ENCODE measurements at regions of chr1 and their contacts with region 1.

Region 1: DNA sequence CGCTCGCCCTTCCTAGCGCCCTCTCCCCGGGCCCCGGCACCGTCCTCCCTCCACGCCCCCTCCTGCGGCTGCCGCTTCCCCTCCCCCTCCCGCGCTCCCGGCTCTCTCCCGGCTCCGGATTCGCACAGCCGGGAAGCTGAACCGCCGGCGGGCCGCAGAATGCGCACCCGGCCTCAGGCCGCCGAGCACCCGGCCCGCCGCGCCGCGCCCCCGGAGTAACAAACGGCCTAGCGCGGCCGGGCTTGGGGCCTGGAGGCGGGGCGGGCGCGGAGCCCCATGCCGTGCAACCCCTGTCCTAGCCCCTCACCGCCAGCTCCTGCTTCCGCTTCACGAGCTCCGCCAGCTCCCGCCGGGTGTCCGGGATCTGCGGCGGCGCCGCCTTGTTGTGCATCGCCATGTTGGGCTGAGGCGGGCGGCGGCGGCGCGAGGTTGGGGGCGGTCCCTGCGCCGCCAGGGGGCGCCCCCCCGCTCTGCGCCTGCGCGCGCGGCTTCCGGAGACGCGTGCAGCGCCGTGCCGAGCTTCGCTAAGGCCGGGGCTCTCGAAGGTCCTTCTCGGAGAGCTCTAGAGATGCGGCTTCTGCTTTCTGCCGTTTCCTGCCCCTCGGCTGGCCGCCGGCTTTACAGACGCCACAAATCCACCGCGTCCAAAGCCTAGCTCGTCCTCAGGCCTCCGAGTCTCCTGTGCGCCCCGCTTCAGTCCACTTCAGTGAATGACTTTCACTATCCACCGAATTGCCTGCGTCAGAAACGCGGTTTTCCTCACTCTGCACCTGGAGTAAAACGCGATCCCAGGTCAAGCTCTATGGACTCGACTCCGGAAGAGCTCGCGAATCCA is at the start of gene MEAF6:
- DNase-seq: peak; percentile 77
- ATAC-seq: peak; percentile 98
- H3K4me3 ChIP-seq: peak within 1 kb of the TSS; percentile 71
- H3K27ac ChIP-seq: peak within 1 kb of the TSS; percentile 93
- H3K4me1 ChIP-seq: peaks cover 2% of the 10 kb centered on the region; the same call in 1 of the 2 replicates
- H3K27me3 ChIP-seq: no peaks in the 10 kb centered on the region
- CTCF ChIP-seq: peak; percentile 88
- POLR2A ChIP-seq: peak; percentile 78
- RAD21 ChIP-seq: no peak
- total RNA-seq, gene MEAF6: 36.2 and 44.4 TPM in 2 replicates

Region 2: DNA sequence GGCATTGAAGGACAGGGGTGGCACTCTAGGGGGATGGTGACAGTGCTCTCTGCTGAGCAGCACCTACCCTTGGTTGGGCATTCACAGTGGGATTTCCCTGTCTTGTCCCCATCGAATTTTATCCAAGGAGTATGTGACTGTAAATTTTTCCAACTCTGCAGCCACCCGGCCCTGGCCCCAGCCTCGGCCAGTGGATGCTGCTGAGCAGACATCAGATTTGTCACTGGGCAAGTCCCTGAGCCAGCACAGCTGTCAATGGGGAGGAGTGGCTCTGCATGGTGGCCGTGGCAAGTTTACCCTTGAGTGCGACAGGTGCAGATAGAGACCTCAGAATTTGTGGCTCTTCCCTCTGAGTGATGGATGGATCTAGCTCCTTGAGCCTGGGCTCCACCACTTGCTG is 791.7 kb before region 1 on chr1:
- CTCF ChIA-PET with region 1: no interaction called
- POLR2A ChIA-PET with region 1: no interaction called
- dilution Hi-C with region 1: no loop called
- in situ Hi-C with region 1: no loop called
- intact Hi-C with region 1: no loop called
- DNase-seq: no peak
- ATAC-seq: no peak
- H3K4me3 ChIP-seq: no peak overlapping the region
- H3K27ac ChIP-seq: no peak overlapping the region
- H3K4me1 ChIP-seq: no peaks in the 10 kb centered on the region
- H3K27me3 ChIP-seq: no peaks in the 10 kb centered on the region
- CTCF ChIP-seq: no peak
- POLR2A ChIP-seq: no peak
- RAD21 ChIP-seq: no peak

Region 3: DNA sequence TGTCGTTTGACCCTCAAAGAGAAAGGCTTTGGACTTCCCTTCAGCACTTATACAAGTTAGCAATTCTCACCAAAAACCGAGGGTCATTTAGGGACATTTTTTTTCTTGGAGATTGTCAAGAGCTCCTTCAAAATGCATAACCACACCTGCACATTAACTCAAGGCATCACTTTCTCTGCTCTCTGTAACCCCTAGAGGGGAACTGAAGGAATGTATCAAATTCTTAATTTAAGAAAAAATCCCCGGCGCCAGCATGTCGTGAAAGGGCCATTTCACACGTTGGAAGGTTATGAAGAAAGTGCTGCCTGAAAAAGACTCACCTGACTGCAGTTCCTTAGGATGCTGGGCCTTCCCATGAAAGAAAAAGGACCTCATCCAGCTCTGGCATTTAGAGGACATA is 171.8 kb before region 1 on chr1:
- CTCF ChIA-PET with region 1: no interaction called
- POLR2A ChIA-PET with region 1: no interaction called
- dilution Hi-C with region 1: no loop called
- in situ Hi-C with region 1: no loop called
- intact Hi-C with region 1: no loop called
- DNase-seq: no peak
- ATAC-seq: no peak
- H3K4me3 ChIP-seq: no peak overlapping the region
- H3K27ac ChIP-seq: no peak overlapping the region
- H3K4me1 ChIP-seq: no peaks in the 10 kb centered on the region
- H3K27me3 ChIP-seq: no peaks in the 10 kb centered on the region
- CTCF ChIP-seq: no peak
- POLR2A ChIP-seq: no peak
- RAD21 ChIP-seq: no peak

Region 4: GRCh38 chr1:37498872-37499617 is 15.5 kb before region 1 on chr1:
- CTCF ChIA-PET with region 1: interaction called, 10 read pairs
- POLR2A ChIA-PET with region 1: no interaction called
- dilution Hi-C with region 1: no loop called
- in situ Hi-C with region 1: no loop called
- intact Hi-C with region 1: no loop called
- DNase-seq: peak; percentile 70
- ATAC-seq: peak; percentile 72
- H3K4me3 ChIP-seq: no peak overlapping the region
- H3K27ac ChIP-seq: no peak overlapping the region; the same call in 1 of the 2 replicates
- H3K4me1 ChIP-seq: no peaks in the 10 kb centered on the region
- H3K27me3 ChIP-seq: no peaks in the 10 kb centered on the region
- CTCF ChIP-seq: no peak
- POLR2A ChIP-seq: no peak
- RAD21 ChIP-seq: no peak

Region 5: GRCh38 chr1:37533317-37534093 is 18.9 kb after region 1 on chr1:
- CTCF ChIA-PET with region 1: no interaction called
- POLR2A ChIA-PET with region 1: no interaction called
- dilution Hi-C with region 1: no loop called
- in situ Hi-C with region 1: no loop called
- intact Hi-C with region 1: loop called (anchors 2 kb)
- DNase-seq: no peak
- ATAC-seq: no peak
- H3K4me3 ChIP-seq: no peak overlapping the region
- H3K27ac ChIP-seq: peak overlapping the region; percentile 20
- H3K4me1 ChIP-seq: peaks cover 11% of the 10 kb centered on the region
- H3K27me3 ChIP-seq: no peaks in the 10 kb centered on the region
- CTCF ChIP-seq: no peak
- POLR2A ChIP-seq: no peak
- RAD21 ChIP-seq: no peak

Region 6: GRCh38 chr1:37553927-37554808 is 39.6 kb after region 1 on chr1 and contains the start of gene SNIP1:
- CTCF ChIA-PET with region 1: interaction called, 3 read pairs
- POLR2A ChIA-PET with region 1: no interaction called
- dilution Hi-C with region 1: no loop called
- in situ Hi-C with region 1: no loop called
- intact Hi-C with region 1: loop called (anchors 2 kb)
- DNase-seq: peak; percentile 88
- ATAC-seq: peak; percentile 71
- H3K4me3 ChIP-seq: peak within 1 kb of the TSS; percentile 88
- H3K27ac ChIP-seq: peak within 1 kb of the TSS; percentile 70
- H3K4me1 ChIP-seq: peaks cover 3% of the 10 kb centered on the region
- H3K27me3 ChIP-seq: no peaks in the 10 kb centered on the region
- CTCF ChIP-seq: no peak
- POLR2A ChIP-seq: peak; percentile 94
- RAD21 ChIP-seq: 0 out of 2 replicates have a peak, but pooled peaks have one; percentile 1
- total RNA-seq, gene SNIP1: 11.3 and 13.9 TPM in 2 replicates

Measured in IMR-90 (cell line).